H1 (cell line): ENCODE measurements at regions of chr10 and their contacts with region 1.

Region 1: GRCh38 chr10:29482591-29483431 is 152.0 kb downstream of the SVIL start:
- DNase-seq: peak in 1 of 2 experiments; percentile 58
- H3K4me3 ChIP-seq: no peak overlapping the region
- H3K27ac ChIP-seq: peak overlapping the region; percentile 24; the same call in 1 of the 2 replicates
- H3K4me1 ChIP-seq: peaks cover 0 to 7% (median 4%) of the 10 kb centered on the region in 4 experiments; a peak in 6 of 7 replicates
- H3K27me3 ChIP-seq: no peaks in the 10 kb centered on the region
- CTCF ChIP-seq: peak in 2 of 3 experiments; percentile 22 to 40; a peak in 1 of 4 replicates
- EP300 ChIP-seq: no peak
- POLR2A ChIP-seq: no peak
- RAD21 ChIP-seq: peak; percentile 11 to 26; a peak in 3 of 4 replicates

Region 2: GRCh38 chr10:29430101-29430500 is 52.7 kb before region 1 on chr10:
- CTCF ChIA-PET with region 1: interaction called, 10 read pairs
- POLR2A ChIA-PET with region 1: no interaction called
- DNase-seq: no peak
- H3K4me3 ChIP-seq: no peak overlapping the region
- H3K27ac ChIP-seq: no peak overlapping the region
- H3K4me1 ChIP-seq: no peaks in the 10 kb centered on the region
- H3K27me3 ChIP-seq: no peaks in the 10 kb centered on the region
- CTCF ChIP-seq: no peak
- EP300 ChIP-seq: no peak
- POLR2A ChIP-seq: no peak
- RAD21 ChIP-seq: no peak

Region 3: GRCh38 chr10:29470355-29470705 is 12.5 kb before region 1 on chr10:
- CTCF ChIA-PET with region 1: interaction called, 25 read pairs
- POLR2A ChIA-PET with region 1: no interaction called
- DNase-seq: peak; percentile 25 to 91
- H3K4me3 ChIP-seq: no peak overlapping the region
- H3K27ac ChIP-seq: no peak overlapping the region
- H3K4me1 ChIP-seq: no peaks in the 10 kb centered on the region; a peak in 2 of 7 replicates
- H3K27me3 ChIP-seq: no peaks in the 10 kb centered on the region
- CTCF ChIP-seq: peak; percentile 81 to 95 (median 89)
- EP300 ChIP-seq: no peak
- POLR2A ChIP-seq: no peak
- RAD21 ChIP-seq: peak; percentile 69 to 80

Region 4: GRCh38 chr10:29496341-29497162 is 13.7 kb after region 1 on chr10:
- CTCF ChIA-PET with region 1: interaction called, 24 read pairs
- POLR2A ChIA-PET with region 1: no interaction called
- DNase-seq: peak; percentile 50 to 97
- H3K4me3 ChIP-seq: peak overlapping the region in 1 of 4 experiments; percentile 28; a peak in 1 of 8 replicates
- H3K27ac ChIP-seq: no peak overlapping the region
- H3K4me1 ChIP-seq: peaks cover 0 to 3% (median 0%) of the 10 kb centered on the region in 4 experiments; a peak in 2 of 7 replicates
- H3K27me3 ChIP-seq: no peaks in the 10 kb centered on the region
- CTCF ChIP-seq: peak; percentile 89 to 97 (median 90)
- EP300 ChIP-seq: no peak
- POLR2A ChIP-seq: no peak
- RAD21 ChIP-seq: peak; percentile 79 to 80

Region 5: GRCh38 chr10:29517352-29517923 is 34.6 kb after region 1 on chr10:
- CTCF ChIA-PET with region 1: interaction called, 10 read pairs
- POLR2A ChIA-PET with region 1: no interaction called
- DNase-seq: peak in 1 of 2 experiments; percentile 70
- H3K4me3 ChIP-seq: no peak overlapping the region
- H3K27ac ChIP-seq: no peak overlapping the region
- H3K4me1 ChIP-seq: no peaks in the 10 kb centered on the region
- H3K27me3 ChIP-seq: no peaks in the 10 kb centered on the region
- CTCF ChIP-seq: peak; percentile 30 to 68 (median 62)
- EP300 ChIP-seq: no peak
- POLR2A ChIP-seq: no peak
- RAD21 ChIP-seq: peak in 1 of 2 experiments; percentile 39; a peak in 2 of 4 replicates